Sciatic nerve (tissue), 2 donors: ENCODE measurements at regions of chr6 and their contacts with region 1.

Region 1: DNA sequence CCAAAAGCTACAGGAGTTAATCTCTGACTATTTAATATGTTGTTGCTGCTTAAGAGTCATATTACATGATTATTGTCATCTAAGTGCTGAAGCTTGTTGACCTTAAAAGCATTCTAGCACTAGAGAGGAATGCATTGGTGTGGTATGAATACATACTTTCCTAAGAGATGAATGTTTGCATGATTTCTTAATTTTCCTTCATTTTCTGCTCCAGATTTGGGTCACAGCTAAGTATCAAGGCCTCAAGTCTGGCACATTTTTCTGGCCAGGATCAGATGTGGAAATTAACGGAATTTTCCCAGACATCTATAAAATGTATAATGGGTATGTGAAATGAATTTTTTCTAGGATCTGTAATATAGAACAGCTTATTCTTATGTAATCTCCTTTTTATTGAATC is 53.6 kb downstream of the ENPP1 start:
- DNase-seq: no peak
- ATAC-seq: no peak

Region 2: DNA sequence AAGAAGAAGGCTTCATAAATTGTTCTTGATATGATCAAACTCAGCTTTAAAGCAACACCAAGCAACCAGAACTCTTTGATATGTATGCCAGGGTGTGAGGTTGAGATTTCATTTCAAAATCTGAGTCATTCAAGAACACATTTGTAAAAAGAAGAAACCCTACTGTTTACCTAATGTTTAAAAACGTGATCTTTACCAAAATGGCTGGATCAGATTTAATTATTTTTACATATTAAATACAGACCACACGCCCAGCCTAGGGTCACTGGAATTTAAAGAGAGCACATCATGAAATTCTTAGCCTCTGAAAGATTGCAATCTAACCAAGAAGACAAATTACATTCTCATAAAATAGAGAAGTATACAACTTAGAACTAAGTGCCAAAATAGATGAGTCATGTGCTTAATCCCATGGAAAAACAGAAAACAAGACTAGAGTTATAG is 1241.0 kb before region 1 on chr6:
- intact Hi-C with region 1: loop called (anchors 5 kb)
- DNase-seq: no peak
- ATAC-seq: no peak

Region 3: DNA sequence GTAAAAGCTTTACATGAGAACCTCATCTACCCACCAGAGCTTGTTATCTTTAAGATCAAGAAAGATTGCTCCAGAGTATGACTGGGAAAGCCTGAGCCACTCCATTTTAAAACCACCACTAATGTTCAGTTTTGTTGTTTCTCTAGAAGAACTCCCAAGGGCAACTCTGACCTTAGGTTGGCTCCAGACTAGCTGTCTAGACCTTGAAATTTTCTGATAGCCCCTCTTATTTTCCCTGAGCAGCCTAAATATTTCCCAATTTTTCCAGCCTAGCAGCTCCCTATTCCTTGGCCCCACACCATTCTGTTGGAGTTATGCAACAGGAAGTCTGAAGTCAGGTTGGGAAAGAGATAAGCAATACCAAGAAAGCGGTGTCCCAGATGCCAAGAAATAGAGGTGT is 1942.9 kb after region 1 on chr6:
- intact Hi-C with region 1: no loop called
- DNase-seq: no peak
- ATAC-seq: peak; percentile 89